RWPE1 (cell line): ENCODE measurements at regions of chr4 and their contacts with region 1.

Region 1: GRCh38 chr4:180084561-180084960 is 2158.6 kb upstream of the TENM3 start:
- DNase-seq: no peak
- H3K27ac ChIP-seq: no peak overlapping the region
- CTCF ChIP-seq: no peak

Region 2: DNA sequence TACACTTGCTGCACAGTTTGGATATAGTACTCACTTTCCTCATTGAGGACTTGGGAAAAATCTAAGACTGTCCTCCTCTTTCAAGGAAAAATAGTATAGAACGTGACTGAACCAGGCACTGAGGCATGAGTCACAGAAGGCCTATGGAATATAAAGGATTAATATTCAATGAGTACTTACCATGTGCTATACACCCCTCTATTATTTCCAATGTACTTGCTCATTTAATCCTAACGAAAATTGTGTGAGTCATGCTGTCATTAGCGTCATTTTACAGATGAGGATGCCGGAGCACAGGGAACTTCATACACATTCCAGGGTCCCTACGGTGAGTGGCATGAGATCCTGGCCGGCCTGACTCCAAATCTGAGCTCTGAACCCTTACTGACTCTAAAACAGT is 22.4 kb after region 1 on chr4:
- CTCF ChIA-PET with region 1: interaction called, 11 read pairs
- POLR2A ChIA-PET with region 1: no interaction called
- DNase-seq: no peak
- H3K27ac ChIP-seq: no peak overlapping the region
- CTCF ChIP-seq: no peak